ENCODE measurements at regions of chr5 and their contacts with region 1.

Region 1: GRCh38 chr5:39164529-39165402 is 54.6 kb downstream of the FYB1 start:
- DNase-seq: peak; percentile 57
- ATAC-seq: peak; percentile 93
- H3K4me3 Mint-ChIP-seq: peak overlapping the region; percentile 48
- H3K27ac Mint-ChIP-seq: peak overlapping the region; percentile 90
- H3K4me1 Mint-ChIP-seq: peaks cover 80% of the 10 kb centered on the region
- H3K27me3 Mint-ChIP-seq: no peaks in the 10 kb centered on the region

Region 2: DNA sequence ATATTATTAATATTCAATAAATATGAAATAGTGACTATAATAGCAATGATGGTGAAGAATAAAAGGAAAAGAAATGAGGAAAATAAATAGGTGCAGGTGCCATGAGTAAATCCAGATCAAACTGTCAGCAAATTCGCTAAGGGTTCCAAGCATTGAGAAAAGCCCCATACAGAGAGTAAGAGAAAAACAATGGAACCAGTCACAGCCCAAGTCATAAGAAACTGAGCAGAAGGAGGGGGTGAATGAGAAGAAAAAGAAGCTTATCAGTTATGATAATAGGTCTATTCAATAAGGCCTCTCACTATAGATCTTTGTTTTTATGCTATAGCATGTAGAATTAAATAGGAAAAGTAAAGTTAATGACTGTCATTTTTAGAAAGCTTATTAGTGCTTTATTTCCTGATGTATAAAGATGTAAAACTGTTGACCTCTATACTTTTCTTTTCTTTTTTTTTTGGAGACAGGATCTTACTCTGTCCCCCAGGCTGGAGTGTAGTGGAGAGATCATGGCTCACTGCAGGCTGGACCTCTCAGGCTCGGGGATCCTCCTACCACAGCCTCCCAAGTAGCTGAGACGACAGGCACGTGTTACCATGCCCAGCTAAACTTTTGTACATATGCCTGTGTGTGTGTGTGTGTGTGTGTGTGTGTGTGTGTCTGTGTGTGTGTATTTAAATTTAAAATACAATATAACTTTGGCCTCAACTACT is 17.8 kb before region 1 on chr5:
- CTCF ChIA-PET with region 1: no interaction called
- DNase-seq: no peak
- ATAC-seq: no peak
- H3K4me3 Mint-ChIP-seq: no peak overlapping the region
- H3K27ac Mint-ChIP-seq: no peak overlapping the region
- H3K4me1 Mint-ChIP-seq: peaks cover 28% of the 10 kb centered on the region
- H3K27me3 Mint-ChIP-seq: no peaks in the 10 kb centered on the region

Region 3: GRCh38 chr5:39187831-39188731 is 23.3 kb after region 1 on chr5:
- CTCF ChIA-PET with region 1: interaction called, 17 read pairs
- DNase-seq: peak; percentile 52
- ATAC-seq: peak; percentile 21
- H3K4me3 Mint-ChIP-seq: peak overlapping the region; percentile 65
- H3K27ac Mint-ChIP-seq: peak overlapping the region; percentile 88
- H3K4me1 Mint-ChIP-seq: peaks cover 85% of the 10 kb centered on the region
- H3K27me3 Mint-ChIP-seq: no peaks in the 10 kb centered on the region

Measured in activated CD8-positive, alpha-beta memory T cell treated with anti-CD3 and anti-CD28 coated beads, Interleukin-2, amount 10 ng/mL, durations not matched to agents 7 days and 5 days (primary cell).